ENCODE measurements at regions of chr6 and their contacts with region 1.

Region 1: GRCh38 chr6:128807577-128807976 is 75.4 kb upstream of the LAMA2 start:
- DNase-seq: no peak
- ATAC-seq: peak in 2 of 8 donors; percentile 12 to 31
- H3K4me3 ChIP-seq: no peak overlapping the region
- H3K27ac ChIP-seq: peak overlapping the region in 1 of 10 donors; percentile 26
- H3K4me1 ChIP-seq: peaks cover 0 to 21% (median 5%) of the 10 kb centered on the region in 9 donors
- H3K27me3 ChIP-seq: no peaks in the 10 kb centered on the region
- CTCF ChIP-seq: peak; percentile 20 to 62 (median 52)

Region 2: DNA sequence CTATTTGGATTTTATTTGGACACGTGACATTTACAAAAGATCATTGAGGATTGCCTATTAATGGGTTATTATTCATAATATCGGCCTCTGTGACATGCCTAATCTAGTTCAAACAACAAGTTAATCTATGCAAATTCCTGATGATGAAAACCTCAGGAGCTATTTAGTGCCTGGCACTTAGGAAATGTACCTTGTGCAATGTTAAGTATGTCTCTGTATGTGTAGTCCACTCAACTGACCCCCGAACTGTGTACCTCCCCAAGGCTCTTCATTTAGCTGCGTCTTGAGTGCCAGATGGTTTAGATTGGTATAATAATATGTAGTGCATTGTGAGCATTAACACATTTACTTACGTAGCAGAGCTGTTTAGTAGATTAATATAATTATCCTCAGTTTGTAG is 82.3 kb after region 1 on chr6:
- intact Hi-C with region 1: loop called in 2 of 10 experiments (anchors 5 kb)
- DNase-seq: no peak
- ATAC-seq: peak in 5 of 8 donors; percentile 27 to 68 (median 42)
- H3K4me3 ChIP-seq: peak overlapping the region in 8 of 10 donors; percentile 6 to 77 (median 28)
- H3K27ac ChIP-seq: peak overlapping the region; percentile 35 to 92 (median 79)
- H3K4me1 ChIP-seq: peaks cover 0 to 16% (median 7%) of the 10 kb centered on the region in 9 donors
- H3K27me3 ChIP-seq: no peaks in the 10 kb centered on the region
- CTCF ChIP-seq: no peak